ENCODE measurements at regions of chr21 and their contacts with region 1.

Region 1: GRCh38 chr21:42051788-42052187 is 19.3 kb upstream of the UMODL1 start:
- DNase-seq: no peak
- ATAC-seq: no peak

Region 2: GRCh38 chr21:40471111-40471510 is 1580.7 kb before region 1 on chr21:
- intact Hi-C with region 1: loop called (anchors 5 kb)
- DNase-seq: no peak
- ATAC-seq: no peak

Region 3: DNA sequence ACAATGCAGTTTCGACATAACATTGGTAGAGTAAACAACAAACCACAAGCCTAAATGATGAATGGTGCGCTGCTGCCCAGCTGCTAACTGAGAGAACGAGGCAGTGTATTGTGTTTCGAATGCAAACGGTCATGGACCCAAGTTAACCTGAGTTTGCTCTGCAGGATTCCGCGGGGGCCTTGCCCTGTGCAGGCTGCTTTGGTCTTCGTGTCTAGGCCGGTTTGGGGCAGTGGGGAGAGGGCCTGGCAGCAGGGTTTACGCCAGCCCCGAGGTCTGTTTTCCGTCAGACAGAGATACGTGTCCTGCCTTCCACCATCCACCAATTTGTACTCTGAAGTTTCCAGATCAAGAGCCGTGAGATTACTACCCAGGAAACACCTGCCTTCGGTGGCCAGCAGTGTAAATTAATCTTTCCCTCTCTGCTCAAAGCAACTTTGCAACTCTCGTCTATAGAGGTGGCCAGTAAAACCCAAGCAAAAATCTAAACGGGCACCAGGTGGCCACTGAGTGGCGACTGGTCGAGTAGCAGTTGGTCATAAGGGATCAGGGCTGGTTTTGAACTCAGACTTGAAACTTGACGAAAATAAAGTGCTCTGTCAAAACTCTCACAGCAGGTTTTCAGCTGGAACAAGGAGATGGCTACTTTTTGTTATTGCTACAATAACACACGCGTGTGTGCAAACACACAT is 166.3 kb before region 1 on chr21:
- intact Hi-C with region 1: no loop called
- DNase-seq: no peak
- ATAC-seq: no peak

Measured in sciatic nerve (tissue), 2 donors.